Calu3 (cell line): ENCODE measurements at regions of chr7 and their contacts with region 1.

Region 1: DNA sequence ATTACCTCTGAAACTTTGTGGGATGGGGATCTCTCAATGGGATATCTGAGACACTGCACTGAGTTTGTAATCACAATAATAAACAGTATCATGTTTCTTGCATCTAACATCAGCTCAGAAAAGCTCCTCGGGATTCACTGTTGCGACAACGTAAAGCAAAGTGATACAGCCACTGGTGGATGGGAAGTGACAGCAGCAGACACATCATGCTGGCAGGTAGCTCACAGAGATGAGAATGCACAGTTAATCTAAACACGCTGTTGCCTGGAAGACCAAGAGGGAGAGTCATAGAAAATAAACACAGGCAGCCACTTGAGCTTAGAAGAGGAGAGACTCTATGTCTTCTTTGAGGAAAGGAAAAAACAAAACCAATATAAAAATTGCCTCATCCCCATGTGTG is 513.8 kb downstream of the MAGI2 start:
- DNase-seq: no peak
- H3K4me3 Mint-ChIP-seq: no peak overlapping the region
- H3K27ac Mint-ChIP-seq: no peak overlapping the region
- H3K4me1 Mint-ChIP-seq: no peaks in the 10 kb centered on the region
- H3K27me3 Mint-ChIP-seq: no peaks in the 10 kb centered on the region
- CTCF ChIP-seq: no peak

Region 2: DNA sequence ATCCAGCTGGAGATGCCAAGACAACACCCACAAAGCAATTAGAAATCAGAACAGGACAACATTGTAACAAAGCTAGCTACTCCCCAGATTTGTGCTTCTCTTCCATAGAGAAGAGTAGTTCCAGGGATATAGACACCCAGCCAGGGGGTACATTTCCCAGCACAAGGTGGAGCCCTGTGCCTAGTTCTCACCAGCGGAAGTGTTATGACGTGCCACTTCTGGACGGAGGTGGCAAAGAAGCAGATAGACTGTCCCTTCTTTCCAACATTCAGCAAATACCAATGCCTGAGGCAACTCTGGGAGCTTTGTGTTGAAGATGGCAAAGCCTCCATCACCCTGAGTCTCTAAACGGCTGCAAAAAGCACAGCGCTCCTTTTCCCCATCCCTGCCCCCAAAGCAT is 1500.1 kb before region 1 on chr7:
- CTCF ChIA-PET with region 1: no interaction called
- intact Hi-C with region 1: no loop called
- DNase-seq: peak; percentile 60
- H3K4me3 Mint-ChIP-seq: no peak overlapping the region
- H3K27ac Mint-ChIP-seq: no peak overlapping the region
- H3K4me1 Mint-ChIP-seq: peaks cover 17% of the 10 kb centered on the region
- H3K27me3 Mint-ChIP-seq: no peaks in the 10 kb centered on the region
- CTCF ChIP-seq: peak; percentile 13

Region 3: DNA sequence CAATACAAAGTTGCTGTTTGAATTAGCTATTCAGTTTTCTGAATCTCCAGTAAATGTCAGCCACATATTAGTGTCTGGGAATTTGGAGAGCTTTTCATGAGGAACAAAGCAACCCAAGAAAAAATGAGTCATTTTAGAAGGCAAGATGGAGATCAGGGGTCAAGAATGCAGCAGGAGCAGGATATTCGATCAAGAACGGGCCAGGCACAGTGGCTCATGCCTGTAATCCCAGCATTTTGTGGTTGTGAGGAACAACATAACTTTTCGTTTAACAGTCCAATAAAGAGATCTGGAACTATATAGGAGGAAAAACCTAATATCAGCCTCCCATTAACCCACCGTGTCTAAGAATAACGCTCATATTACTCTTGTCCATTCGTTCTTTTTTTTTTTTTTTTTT is 86.7 kb before region 1 on chr7:
- CTCF ChIA-PET with region 1: no interaction called
- intact Hi-C with region 1: no loop called
- DNase-seq: no peak
- H3K4me3 Mint-ChIP-seq: no peak overlapping the region
- H3K27ac Mint-ChIP-seq: no peak overlapping the region
- H3K4me1 Mint-ChIP-seq: no peaks in the 10 kb centered on the region
- H3K27me3 Mint-ChIP-seq: no peaks in the 10 kb centered on the region
- CTCF ChIP-seq: no peak

Region 4: DNA sequence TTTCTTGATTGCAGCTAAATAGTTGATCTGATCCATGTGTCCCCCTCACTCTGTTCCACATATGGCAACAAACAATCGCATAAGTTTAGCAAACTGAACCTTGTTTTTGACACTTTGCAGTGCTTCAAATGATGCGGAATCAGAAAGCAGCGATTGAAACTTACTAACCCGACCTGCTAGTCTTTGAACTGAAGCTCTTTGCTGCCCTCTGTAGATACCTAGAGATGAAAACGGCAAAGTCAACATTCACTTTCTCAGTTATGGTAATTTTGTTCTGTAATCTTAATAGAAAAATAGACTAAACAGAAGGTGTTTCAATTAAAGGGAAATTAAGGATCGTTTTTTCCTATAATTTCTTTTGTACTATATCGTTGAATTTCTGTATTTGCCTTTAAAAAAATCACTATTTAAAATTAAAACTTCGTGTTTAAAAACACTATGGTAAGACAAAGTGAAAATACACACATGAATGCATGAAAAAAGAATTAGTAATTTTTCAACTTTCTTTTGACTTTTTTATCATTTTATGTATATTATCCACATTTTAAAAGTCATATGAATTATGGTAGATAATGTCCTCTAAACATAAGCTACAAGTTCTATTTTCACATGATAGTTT is 237.3 kb after region 1 on chr7:
- CTCF ChIA-PET with region 1: no interaction called
- intact Hi-C with region 1: loop called (anchors 5 kb)
- DNase-seq: peak; percentile 20
- H3K4me3 Mint-ChIP-seq: no peak overlapping the region
- H3K27ac Mint-ChIP-seq: no peak overlapping the region
- H3K4me1 Mint-ChIP-seq: no peaks in the 10 kb centered on the region
- H3K27me3 Mint-ChIP-seq: no peaks in the 10 kb centered on the region
- CTCF ChIP-seq: peak; percentile 21